ENCODE measurements at regions of chr10 and their contacts with region 1.

Region 1: DNA sequence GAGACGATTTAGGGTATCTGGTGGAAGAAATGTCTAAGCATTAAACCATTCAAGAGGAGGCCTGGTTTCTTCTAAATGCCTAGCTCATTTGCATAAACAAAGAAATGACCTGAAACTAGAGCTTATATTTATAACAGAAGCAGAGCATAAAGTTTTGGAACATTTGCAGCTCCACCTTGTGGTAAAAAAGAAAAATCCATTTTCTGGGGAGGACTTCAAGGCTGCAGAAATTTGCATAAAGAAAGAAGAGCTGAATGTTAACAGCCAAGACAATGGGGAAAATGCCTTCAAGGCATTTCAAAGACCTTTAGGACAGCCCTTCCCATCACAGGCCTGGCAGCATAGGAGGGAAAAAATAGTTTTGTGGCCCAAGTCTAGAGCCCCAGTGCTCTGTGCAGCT is 362.0 kb downstream of the ZNF248 start:
- DNase-seq: no peak
- ATAC-seq: no peak
- H3K4me3 ChIP-seq: no peak overlapping the region
- H3K27ac ChIP-seq: no peak overlapping the region
- H3K4me1 ChIP-seq: no peaks in the 10 kb centered on the region
- H3K27me3 ChIP-seq: peaks cover 0 to 4% (median 0%) of the 10 kb centered on the region in 9 donors
- CTCF ChIP-seq: peak in 9 of 12 donors; percentile 18 to 51 (median 36)
- POLR2A ChIP-seq: no peak

Region 2: GRCh38 chr10:36899651-36900050 is 595.8 kb before region 1 on chr10:
- intact Hi-C with region 1: loop called in 1 of 10 experiments (anchors 10 kb)
- DNase-seq: no peak
- ATAC-seq: no peak
- H3K4me3 ChIP-seq: no peak overlapping the region
- H3K27ac ChIP-seq: no peak overlapping the region
- H3K4me1 ChIP-seq: no peaks in the 10 kb centered on the region
- H3K27me3 ChIP-seq: no peaks in the 10 kb centered on the region
- CTCF ChIP-seq: no peak
- POLR2A ChIP-seq: no peak

Region 3: DNA sequence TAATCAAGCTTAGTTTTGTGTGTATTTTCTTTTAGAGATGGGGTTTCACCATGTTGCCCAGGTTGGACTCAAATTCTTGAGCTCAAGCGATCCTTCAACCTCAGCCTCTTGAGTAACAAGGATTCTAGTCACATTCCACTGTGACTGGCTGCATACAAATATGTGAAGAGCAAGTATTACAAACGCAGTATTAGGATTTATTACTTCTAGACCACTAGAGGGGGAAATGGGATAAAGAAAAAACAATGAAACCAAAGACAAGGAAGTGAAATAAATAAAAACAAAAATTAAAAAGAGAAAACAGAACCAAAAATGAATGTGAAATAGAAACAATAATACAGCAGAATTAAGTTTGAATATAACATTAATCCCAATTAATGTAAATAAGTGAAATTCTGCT is 61.3 kb before region 1 on chr10:
- intact Hi-C with region 1: loop called in 1 of 10 experiments (anchors 10 kb)
- DNase-seq: no peak
- ATAC-seq: no peak
- H3K4me3 ChIP-seq: no peak overlapping the region
- H3K27ac ChIP-seq: no peak overlapping the region
- H3K4me1 ChIP-seq: no peaks in the 10 kb centered on the region
- H3K27me3 ChIP-seq: peaks cover 0 to 6% (median 0%) of the 10 kb centered on the region in 9 donors
- CTCF ChIP-seq: peak in 9 of 12 donors; percentile 13 to 48 (median 34)
- POLR2A ChIP-seq: no peak

Region 4: DNA sequence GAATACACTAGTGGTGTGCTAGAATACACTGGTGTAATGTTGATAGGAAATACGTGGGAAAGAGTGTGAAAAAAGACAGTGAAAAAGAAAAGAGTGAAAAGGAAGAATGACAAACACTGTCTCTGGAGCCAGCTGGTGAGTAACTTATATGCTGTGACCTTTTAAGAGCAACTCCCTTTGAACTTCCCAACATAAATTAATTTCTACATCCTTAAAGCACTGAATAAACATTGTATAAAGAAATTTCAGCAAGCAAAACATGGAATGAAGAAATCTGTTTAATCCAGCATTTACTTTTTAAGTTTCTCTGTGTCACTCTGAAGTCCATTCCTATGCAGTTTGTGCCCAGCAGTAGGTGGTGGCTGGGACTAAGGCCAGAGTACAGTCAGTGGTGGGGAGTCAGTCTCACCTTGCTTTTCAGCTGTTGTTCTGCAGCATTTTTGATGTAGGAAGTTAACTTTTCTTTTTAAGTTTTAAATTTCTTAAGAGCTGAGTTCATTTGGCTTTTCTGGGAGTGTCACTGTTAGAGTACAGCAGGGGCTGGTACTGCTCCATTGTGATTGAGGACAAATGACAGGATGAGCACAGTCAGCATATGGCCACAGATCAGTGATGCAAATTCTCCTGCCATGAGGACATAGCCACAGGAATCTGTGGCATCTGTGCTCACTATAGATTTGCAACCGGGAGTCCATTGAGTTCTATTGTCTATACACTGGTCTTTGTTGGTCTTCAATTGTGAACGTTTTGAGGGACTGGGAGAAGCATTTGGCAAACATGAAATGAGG is 40.2 kb after region 1 on chr10:
- intact Hi-C with region 1: no loop called
- DNase-seq: no peak
- ATAC-seq: no peak
- H3K4me3 ChIP-seq: no peak overlapping the region
- H3K27ac ChIP-seq: no peak overlapping the region
- H3K4me1 ChIP-seq: no peaks in the 10 kb centered on the region
- H3K27me3 ChIP-seq: peaks cover 0 to 6% (median 0%) of the 10 kb centered on the region in 9 donors
- CTCF ChIP-seq: no peak
- POLR2A ChIP-seq: no peak